ENCODE measurements at regions of chr4 and their contacts with region 1.

Region 1: DNA sequence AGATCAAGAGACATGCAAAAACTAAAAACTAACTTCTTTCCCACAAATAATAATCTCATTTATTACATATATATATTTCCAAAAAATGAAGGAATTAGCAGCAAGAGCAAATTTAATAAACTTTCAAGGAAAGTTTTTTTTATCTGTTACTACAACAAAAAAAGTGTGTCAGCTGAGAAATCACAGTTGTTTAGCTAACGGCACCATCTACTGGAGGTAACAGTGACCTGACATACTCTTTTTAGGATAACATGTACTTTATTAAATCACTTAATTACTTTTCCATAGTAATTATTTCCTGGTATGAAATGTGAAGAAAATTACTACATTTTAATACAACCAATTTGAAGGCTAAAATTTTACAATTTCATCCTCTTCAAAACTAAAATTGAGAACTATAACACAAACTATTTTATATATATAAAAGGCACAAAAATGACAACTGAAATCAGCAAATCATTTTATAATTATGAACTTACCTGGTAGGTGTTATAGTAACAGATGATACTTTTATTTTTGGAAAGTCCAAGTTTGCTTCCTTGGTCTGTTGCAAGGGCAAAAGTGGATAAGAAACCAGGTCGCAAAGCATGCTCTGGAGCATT is 9.1 kb downstream of the LAMTOR3 start:
- DNase-seq: peak in 19 of 35 experiments; percentile 2 to 73 (median 21)
- ATAC-seq: peak in 1 of 4 experiments; percentile 64
- H3K4me3 ChIP-seq: no peak overlapping the region
- H3K4me3 Mint-ChIP-seq: no peak overlapping the region
- H3K27ac ChIP-seq: no peak overlapping the region
- H3K27ac Mint-ChIP-seq: no peak overlapping the region
- H3K4me1 ChIP-seq: no peaks in the 10 kb centered on the region
- H3K4me1 Mint-ChIP-seq: peaks cover 0 to 16% (median 12%) of the 10 kb centered on the region in 3 donors
- H3K27me3 ChIP-seq: no peaks in the 10 kb centered on the region
- H3K27me3 Mint-ChIP-seq: no peaks in the 10 kb centered on the region

Region 2: DNA sequence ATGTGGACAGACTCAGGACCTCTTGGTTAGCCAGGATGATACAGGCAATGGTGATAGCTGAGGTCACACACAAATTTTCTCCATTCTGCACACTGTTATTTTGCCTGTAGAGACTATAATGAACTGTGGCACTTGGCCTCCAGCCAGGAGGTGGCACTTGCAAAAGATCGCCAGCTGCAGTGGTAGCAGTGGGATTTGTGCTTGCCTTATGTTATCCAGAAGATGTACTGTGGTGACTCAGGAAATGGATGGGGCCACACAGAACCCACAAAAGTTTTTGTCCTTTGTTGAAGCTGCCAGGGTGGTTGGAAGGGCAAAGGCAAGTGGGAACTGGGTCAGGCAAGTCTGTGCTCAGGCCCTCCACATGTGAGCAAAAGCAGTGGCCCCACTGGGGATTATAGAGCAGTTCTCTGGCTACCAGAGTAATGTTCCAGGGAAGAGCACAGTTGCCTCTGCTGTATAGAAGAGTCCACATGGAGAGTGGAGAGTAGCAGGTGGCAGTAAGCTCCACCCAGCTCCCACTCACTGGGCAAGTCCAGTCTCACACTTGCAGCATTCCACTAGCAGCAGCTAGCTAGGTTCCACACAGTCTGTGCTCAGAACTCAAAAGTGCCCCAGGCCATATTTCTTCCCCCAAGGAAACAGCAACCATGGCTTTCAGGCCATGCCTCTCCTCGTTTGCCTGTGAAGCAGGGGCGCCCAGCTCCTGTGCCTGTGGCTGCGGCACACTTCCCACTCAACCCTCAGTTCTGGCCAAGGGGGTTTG is 380.2 kb before region 1 on chr4:
- CTCF ChIA-PET with region 1: no interaction called
- POLR2A ChIA-PET with region 1: no interaction called
- DNase-seq: no peak
- ATAC-seq: no peak
- H3K4me3 ChIP-seq: no peak overlapping the region
- H3K4me3 Mint-ChIP-seq: no peak overlapping the region
- H3K27ac ChIP-seq: no peak overlapping the region
- H3K27ac Mint-ChIP-seq: peak overlapping the region; percentile 16 to 20
- H3K4me1 ChIP-seq: peaks cover 22 to 26% of the 10 kb centered on the region in 2 experiments
- H3K4me1 Mint-ChIP-seq: peaks cover 45 to 52% (median 46%) of the 10 kb centered on the region in 3 donors
- H3K27me3 ChIP-seq: no peaks in the 10 kb centered on the region
- H3K27me3 Mint-ChIP-seq: no peaks in the 10 kb centered on the region

Region 3: DNA sequence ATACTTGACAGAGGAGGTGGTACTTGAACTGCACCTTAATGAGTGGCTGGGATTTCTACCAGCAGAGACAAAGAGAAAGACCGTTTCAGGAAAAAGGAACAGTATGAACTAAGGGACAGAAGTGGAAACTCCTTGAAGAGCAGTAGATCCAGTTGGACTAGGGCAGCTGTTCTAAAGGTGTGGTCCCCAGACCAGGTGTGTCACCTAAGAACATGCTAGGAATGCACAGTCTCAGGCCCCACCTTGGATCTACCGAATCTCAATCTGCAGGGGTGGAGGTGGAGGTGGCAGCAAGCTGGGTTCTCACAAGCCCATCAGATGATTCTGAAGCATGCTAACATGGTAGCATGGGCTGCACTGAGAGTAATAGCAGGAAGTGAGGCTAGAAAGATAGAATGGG is 46.2 kb before region 1 on chr4:
- CTCF ChIA-PET with region 1: no interaction called
- POLR2A ChIA-PET with region 1: no interaction called
- DNase-seq: no peak
- ATAC-seq: no peak
- H3K4me3 ChIP-seq: no peak overlapping the region
- H3K4me3 Mint-ChIP-seq: no peak overlapping the region
- H3K27ac ChIP-seq: no peak overlapping the region
- H3K27ac Mint-ChIP-seq: no peak overlapping the region
- H3K4me1 ChIP-seq: peaks cover 0 to under 1% of the 10 kb centered on the region in 2 experiments
- H3K4me1 Mint-ChIP-seq: peaks cover 2 to 14% (median 9%) of the 10 kb centered on the region in 3 donors
- H3K27me3 ChIP-seq: no peaks in the 10 kb centered on the region
- H3K27me3 Mint-ChIP-seq: no peaks in the 10 kb centered on the region

Region 4: DNA sequence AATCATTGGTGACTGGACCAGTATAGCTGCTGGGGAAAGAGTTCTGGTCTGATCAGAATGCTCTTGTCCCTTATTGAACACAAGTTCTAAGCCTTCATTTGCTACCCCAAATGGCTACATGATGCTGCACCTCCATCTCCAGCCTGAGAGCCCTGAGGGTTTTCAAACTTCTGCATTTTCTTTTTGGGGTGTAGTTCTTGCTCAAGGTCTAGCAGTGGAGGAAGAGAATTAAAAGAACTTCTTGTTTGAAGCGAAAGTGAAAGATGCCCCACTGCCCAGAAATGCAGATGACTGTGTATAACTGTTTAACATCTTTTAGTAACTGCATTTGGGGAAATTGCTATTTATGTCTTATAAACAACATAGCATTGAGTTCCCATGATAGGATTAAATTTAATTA is 29.5 kb before region 1 on chr4:
- CTCF ChIA-PET with region 1: no interaction called
- POLR2A ChIA-PET with region 1: interaction called, 5 to 13 read pairs
- DNase-seq: peak in 2 of 35 experiments; percentile 20 to 27
- ATAC-seq: peak; percentile 38 to 56 (median 46)
- H3K4me3 ChIP-seq: no peak overlapping the region
- H3K4me3 Mint-ChIP-seq: peak overlapping the region in 1 of 3 donors; percentile 21
- H3K27ac ChIP-seq: peak overlapping the region; percentile 40
- H3K27ac Mint-ChIP-seq: peak overlapping the region; percentile 74 to 91
- H3K4me1 ChIP-seq: peaks cover 0 to 18% of the 10 kb centered on the region in 2 experiments
- H3K4me1 Mint-ChIP-seq: peaks cover 31 to 47% (median 37%) of the 10 kb centered on the region in 3 donors
- H3K27me3 ChIP-seq: no peaks in the 10 kb centered on the region
- H3K27me3 Mint-ChIP-seq: no peaks in the 10 kb centered on the region

Region 5: DNA sequence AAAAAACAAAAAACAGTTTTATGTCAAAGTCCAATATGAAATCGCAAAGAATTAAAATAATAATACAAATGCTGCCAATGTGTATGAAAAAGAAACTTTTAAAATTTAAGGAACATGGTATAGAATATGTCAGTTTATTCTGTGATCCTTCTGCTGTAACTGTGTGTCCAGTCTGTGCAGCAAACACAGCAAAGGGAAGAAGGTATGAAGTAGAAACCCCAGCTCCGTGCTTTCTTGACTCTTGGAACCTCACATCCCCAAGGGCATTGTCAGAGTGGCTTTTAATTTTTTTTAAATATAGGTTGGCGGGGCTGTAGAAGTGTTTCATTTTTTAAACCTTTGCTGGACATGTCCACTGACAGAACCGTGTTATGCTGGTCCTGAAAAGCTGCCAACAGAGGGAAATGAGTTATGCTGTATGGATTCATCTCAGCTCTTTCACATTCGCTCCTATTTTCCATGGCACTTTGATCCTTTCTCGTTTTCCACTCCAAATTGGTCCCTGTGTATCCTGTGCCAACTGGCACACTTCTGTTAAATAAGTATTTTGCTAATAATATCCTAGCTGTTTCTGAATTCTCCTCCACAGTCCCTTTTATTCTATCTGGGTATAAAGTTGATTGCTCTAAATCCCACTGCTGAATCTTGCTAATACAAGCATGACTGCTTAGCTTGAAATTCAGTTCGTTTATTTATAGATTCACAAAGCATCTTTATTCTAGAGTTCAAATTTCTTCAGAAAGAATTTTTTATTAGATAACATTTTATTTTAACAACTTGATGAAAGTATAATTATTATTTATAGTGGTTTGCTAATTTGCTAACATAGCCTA is 432.1 kb after region 1 on chr4:
- CTCF ChIA-PET with region 1: no interaction called
- POLR2A ChIA-PET with region 1: no interaction called
- DNase-seq: no peak
- ATAC-seq: no peak
- H3K4me3 ChIP-seq: no peak overlapping the region
- H3K4me3 Mint-ChIP-seq: no peak overlapping the region
- H3K27ac ChIP-seq: no peak overlapping the region
- H3K27ac Mint-ChIP-seq: no peak overlapping the region
- H3K4me1 ChIP-seq: no peaks in the 10 kb centered on the region
- H3K4me1 Mint-ChIP-seq: no peaks in the 10 kb centered on the region
- H3K27me3 ChIP-seq: no peaks in the 10 kb centered on the region
- H3K27me3 Mint-ChIP-seq: peaks cover 3 to 7% of the 10 kb centered on the region in 2 donors